Colonic mucosa (tissue), 4 donors: ENCODE measurements at regions of chr1 and their contacts with region 1.

Region 1: GRCh38 chr1:151008190-151008860 is at the start of gene PRUNE1:
- DNase-seq: peak; percentile 98
- H3K4me3 ChIP-seq: peak within 1 kb of the TSS; percentile 56
- H3K27ac ChIP-seq: peak within 1 kb of the TSS; percentile 91
- H3K4me1 ChIP-seq: peaks cover 10% of the 10 kb centered on the region
- H3K27me3 ChIP-seq: no peaks in the 10 kb centered on the region
- CTCF ChIP-seq: no peak
- total RNA-seq, gene PRUNE1: 20.4 to 21.5 TPM

Region 2: GRCh38 chr1:151059078-151059907 is 51.0 kb after region 1 on chr1 and contains the start of gene CDC42SE1:
- intact Hi-C with region 1: loop called (anchors 5 kb)
- DNase-seq: peak; percentile 83
- H3K4me3 ChIP-seq: peak within 1 kb of the TSS; percentile 88
- H3K27ac ChIP-seq: peak within 1 kb of the TSS; percentile 91
- H3K4me1 ChIP-seq: peaks cover 7% of the 10 kb centered on the region
- H3K27me3 ChIP-seq: no peaks in the 10 kb centered on the region
- CTCF ChIP-seq: peak; percentile 83
- total RNA-seq, gene CDC42SE1: 57.9 to 66.8 TPM

Region 3: DNA sequence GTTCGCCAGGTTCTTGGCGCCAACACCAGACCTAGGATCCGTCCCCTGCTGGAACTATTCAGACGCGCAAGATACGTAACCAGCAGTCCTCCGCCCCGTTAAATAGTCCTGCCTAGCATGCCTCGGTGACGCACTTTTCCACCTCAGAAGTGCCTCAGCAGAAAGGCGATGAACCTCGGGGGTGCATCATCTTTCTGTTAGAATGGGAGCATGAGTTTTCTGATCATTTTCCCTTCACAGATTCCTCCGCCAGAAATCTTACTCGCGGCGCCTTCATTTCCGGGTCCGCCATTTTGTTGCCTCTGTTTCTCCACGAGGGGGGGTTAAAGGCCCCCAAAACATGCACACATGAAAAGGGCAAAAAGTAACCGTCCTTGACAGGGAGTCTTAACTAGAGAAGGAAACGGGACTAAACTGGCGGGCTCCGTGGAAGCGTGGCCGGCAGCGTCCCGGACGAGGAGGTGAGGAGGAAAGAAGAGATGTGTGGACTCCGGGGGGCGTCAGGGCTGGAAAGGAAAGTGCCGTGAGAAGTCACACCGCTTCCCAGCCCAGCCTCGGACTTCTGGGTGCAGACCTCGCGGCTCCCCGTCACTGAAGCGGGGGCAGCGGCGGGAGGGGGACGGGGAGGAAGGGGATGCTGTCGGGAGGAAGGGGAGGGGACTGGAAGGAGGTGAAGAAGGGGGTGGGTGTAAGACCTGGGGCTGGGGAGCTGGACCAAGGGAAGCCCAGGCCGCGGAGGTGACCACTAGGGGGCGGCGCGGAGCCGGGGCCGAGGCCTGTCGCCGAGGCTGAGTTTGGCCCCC is 62.4 kb after region 1 on chr1 and contains the start of gene GABPB2:
- intact Hi-C with region 1: no loop called
- DNase-seq: peak; percentile 93
- H3K4me3 ChIP-seq: peak within 1 kb of the TSS; percentile 74
- H3K27ac ChIP-seq: peak within 1 kb of the TSS; percentile 98
- H3K4me1 ChIP-seq: peaks cover 6% of the 10 kb centered on the region
- H3K27me3 ChIP-seq: no peaks in the 10 kb centered on the region
- CTCF ChIP-seq: peak; percentile 91
- total RNA-seq, gene GABPB2: 13.1 to 15.2 TPM